MCF 10A (cell line): ENCODE measurements at regions of chr4 and their contacts with region 1.

Region 1: DNA sequence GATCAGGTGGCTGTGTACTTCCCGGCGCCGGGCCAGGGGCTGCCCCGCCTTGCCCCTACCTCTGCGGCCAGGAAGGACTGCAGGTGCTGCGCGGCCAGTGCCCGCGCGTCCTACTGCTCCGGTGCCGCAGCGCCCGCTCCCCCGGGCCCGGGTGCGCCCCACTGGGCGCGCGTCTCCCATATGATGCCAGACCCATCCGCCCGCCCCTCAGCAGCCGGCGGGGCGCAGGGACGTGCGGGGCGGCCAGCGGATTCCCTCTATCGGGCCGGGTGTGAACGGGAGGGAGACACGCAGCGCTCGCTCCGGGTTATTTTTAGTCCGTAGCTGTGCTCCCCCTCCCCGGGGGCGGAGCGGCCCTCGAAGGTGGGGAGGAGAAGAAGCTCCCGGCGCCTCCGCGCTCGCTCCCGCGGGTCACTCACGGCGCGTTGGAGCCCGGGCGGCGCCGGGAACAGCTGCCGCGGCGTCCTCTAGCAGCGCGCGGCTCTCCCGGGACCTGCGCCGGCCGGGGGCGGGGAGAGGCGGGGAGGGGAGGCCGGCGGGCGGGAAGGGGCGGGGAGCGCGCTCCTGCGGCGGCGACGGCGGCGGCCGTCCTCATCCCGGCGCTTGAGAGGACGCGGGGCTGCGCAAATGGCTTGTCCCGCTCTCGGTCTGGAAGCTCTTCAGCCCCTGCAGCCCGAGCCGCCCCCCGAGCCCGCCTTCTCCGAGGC is 103.6 kb downstream of the UCHL1 start:
- DNase-seq: peak; percentile 75
- H3K4me3 Mint-ChIP-seq: peak overlapping the region; percentile 89
- H3K27ac Mint-ChIP-seq: no peak overlapping the region
- H3K4me1 Mint-ChIP-seq: peaks cover 30% of the 10 kb centered on the region
- H3K27me3 Mint-ChIP-seq: no peaks in the 10 kb centered on the region
- CTCF ChIP-seq: no peak

Region 2: DNA sequence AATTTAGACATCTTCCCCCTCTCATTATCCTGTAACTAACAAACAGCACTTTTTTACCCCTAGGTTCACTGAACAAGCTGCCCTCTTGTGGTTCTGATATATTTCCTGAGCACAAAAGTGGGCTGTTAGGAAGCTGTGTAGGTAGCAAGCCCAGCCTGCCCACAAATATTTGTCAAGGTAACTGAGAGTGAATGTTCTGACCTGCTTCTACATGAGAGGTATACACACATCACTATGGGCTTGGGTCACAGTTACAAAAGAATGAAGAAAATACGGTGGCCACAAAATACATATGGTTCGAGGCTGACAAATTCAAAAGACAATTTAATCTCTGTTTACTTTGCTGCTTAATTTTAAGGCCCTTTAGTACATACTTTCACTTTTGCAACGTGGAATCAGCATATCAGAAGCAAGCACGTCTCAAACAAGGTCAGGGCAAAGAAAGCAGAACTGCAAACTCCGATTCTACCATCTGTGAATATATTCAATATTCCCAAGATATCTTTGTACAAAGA is 809.4 kb before region 1 on chr4:
- CTCF ChIA-PET with region 1: no interaction called
- POLR2A ChIA-PET with region 1: no interaction called
- intact Hi-C with region 1: no loop called
- DNase-seq: peak; percentile 64
- H3K4me3 Mint-ChIP-seq: peak overlapping the region; percentile 58
- H3K27ac Mint-ChIP-seq: peak overlapping the region; percentile 32
- H3K4me1 Mint-ChIP-seq: peaks cover 15% of the 10 kb centered on the region
- H3K27me3 Mint-ChIP-seq: no peaks in the 10 kb centered on the region
- CTCF ChIP-seq: peak; percentile 17

Region 3: GRCh38 chr4:41475402-41475801 is 115.0 kb after region 1 on chr4:
- CTCF ChIA-PET with region 1: no interaction called
- POLR2A ChIA-PET with region 1: interaction called, 3 read pairs
- intact Hi-C with region 1: loop called (anchors 5 kb)
- DNase-seq: peak; percentile 84
- H3K4me3 Mint-ChIP-seq: no peak overlapping the region
- H3K27ac Mint-ChIP-seq: peak overlapping the region; percentile 53
- H3K4me1 Mint-ChIP-seq: peaks cover 21% of the 10 kb centered on the region
- H3K27me3 Mint-ChIP-seq: no peaks in the 10 kb centered on the region
- CTCF ChIP-seq: no peak

Region 4: DNA sequence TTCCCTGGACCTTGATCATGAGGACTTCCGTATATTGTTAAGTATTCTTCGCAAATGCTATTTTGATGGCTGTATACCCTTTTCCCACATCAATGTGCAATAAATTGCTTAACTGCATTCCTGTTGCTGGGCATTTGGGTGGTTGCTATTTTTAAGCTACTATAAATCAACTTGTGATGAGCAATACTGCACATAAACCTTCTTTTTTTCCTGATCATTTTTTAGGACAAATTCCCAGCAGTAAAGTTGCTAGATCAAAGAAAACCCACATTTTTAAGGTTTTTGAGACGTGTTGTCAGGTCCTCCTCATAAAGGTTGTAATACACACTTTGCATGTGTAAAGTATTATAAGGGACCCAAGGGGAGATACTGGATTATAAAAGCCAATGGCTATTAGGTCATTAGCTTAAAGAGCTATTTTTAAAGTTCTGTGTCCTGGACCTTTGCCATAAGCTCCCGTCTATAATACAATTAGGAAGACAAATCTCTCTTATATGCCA is 213.2 kb after region 1 on chr4:
- CTCF ChIA-PET with region 1: no interaction called
- POLR2A ChIA-PET with region 1: interaction called, 5 read pairs
- intact Hi-C with region 1: loop called (anchors 1 kb)
- DNase-seq: peak; percentile 73
- H3K4me3 Mint-ChIP-seq: peak overlapping the region; percentile 9
- H3K27ac Mint-ChIP-seq: peak overlapping the region; percentile 96
- H3K4me1 Mint-ChIP-seq: peaks cover 45% of the 10 kb centered on the region
- H3K27me3 Mint-ChIP-seq: no peaks in the 10 kb centered on the region
- CTCF ChIP-seq: no peak